Mucosa of descending colon (tissue), 3 donors: ENCODE measurements at regions of chr12 and their contacts with region 1.

Region 1: DNA sequence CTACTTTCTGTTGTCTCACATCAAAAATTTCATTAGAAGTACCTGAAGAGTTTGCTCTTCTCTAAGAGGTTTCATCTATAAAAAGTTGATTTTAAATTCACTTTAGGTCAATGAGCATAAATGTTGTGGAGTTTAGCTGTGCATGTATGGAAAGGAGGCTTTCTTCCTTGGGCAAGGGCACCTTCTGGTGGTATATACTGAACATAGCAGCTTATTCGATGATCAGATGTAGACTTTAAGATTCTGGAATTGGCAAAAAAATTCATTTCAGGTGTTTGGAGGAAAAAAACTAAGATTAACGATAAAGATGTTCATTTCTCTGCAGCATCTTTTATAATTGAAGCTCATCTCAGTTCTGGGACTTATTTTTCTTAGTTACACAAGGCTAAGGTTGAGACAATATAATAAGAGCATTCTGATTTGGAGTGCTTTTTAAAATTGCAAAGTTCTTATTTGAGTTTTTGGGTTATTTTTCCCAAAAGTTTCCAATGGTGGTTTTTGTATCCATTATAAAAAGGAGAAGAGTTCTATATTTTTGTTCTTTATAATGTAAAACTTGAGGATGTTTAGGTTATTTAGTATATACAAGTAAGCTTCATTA is 46.8 kb downstream of the TMEM117 start:
- DNase-seq: peak in 1 of 3 donors; percentile 45
- ATAC-seq: peak; percentile 84
- H3K4me3 ChIP-seq: no peak overlapping the region
- H3K4me1 ChIP-seq: no peaks in the 10 kb centered on the region
- CTCF ChIP-seq: peak; percentile 55

Region 2: DNA sequence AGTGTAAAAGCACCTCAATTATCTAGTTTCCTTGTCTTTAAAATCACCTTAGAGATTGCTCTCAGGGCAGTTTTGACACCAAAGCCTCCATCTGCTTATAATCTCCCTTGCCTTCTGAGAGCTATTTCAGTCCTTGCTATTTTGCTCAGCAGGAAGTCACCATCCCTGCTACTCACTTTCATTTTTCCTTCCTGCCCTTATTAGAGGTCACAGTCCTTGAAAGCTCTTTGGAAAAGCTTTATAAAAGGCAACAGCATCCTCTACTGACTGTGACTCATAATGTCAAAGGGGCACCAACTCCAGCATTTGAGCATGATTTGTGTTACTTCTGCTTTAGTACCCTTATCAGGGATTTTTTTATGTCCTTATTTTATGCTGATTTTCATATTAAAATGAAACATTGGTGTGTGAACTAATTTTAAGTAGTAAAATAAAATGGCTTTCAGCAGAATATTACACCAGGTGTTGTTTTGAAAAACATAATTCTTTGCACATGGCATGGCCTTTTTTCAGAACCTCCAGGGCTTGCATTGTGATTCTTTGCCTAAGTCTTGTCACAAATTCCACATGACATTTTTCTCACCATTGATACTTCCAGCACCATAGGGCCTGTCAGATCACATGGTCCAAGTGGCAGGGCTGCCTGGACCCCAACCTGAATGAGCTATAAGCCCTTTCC is 543.7 kb before region 1 on chr12:
- intact Hi-C with region 1: no loop called
- DNase-seq: peak in 1 of 3 donors; percentile 1
- ATAC-seq: no peak
- H3K4me3 ChIP-seq: no peak overlapping the region
- H3K4me1 ChIP-seq: no peaks in the 10 kb centered on the region
- CTCF ChIP-seq: no peak

Region 3: DNA sequence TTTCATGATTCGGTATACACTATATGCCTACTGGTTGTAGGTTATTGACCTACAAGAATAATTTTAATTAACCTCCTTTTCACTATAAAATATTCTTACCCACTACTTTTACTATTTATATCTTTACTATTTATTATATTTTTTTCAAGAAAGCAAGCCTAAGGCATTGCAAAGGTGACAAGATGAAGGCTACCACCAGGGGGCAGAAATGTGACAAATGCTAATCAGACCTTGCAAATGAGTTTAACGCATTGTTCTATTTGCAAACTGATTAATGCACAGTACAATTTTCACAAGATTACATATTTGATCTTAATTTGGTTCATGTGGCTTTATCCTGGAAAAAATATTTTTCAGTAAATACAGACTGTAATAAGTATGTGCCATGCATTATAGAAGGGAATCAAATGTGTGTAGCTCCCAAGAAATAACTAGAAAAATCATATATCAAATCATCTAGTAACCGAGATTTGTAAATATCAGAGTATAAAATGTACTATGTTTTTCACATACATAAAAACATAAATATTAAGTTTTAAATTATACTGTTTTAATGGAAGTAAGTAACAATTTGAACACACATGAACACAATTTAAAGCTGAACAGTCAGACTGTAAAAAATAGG is 437.6 kb before region 1 on chr12:
- intact Hi-C with region 1: loop called in 1 of 2 experiments (anchors 10 kb)
- DNase-seq: peak in 1 of 3 donors; percentile 72
- ATAC-seq: no peak
- H3K4me3 ChIP-seq: no peak overlapping the region
- H3K4me1 ChIP-seq: no peaks in the 10 kb centered on the region
- CTCF ChIP-seq: peak; percentile 32

Region 4: GRCh38 chr12:43776498-43776897 is 106.2 kb before region 1 on chr12:
- intact Hi-C with region 1: loop called in 1 of 2 experiments (anchors 10 kb)
- DNase-seq: peak in 1 of 3 donors; percentile 40
- ATAC-seq: no peak
- H3K4me3 ChIP-seq: no peak overlapping the region
- H3K4me1 ChIP-seq: no peaks in the 10 kb centered on the region
- CTCF ChIP-seq: no peak

Region 5: GRCh38 chr12:44031472-44032185 is 149.0 kb after region 1 on chr12:
- intact Hi-C with region 1: no loop called
- DNase-seq: no peak
- ATAC-seq: no peak
- H3K4me3 ChIP-seq: no peak overlapping the region
- H3K4me1 ChIP-seq: no peaks in the 10 kb centered on the region
- CTCF ChIP-seq: no peak